HCT116 (cell line): ENCODE measurements at regions of chr16 and their contacts with region 1.

Region 1: GRCh38 chr16:30984669-30985400 is at the start of gene HSD3B7:
- DNase-seq: peak; percentile 58
- ATAC-seq: peak; percentile 91
- H3K4me3 ChIP-seq: peak within 1 kb of the TSS; percentile 35 to 45
- H3K27ac ChIP-seq: peak within 1 kb of the TSS; percentile 49; the same call in 1 of the 2 replicates
- H3K4me1 ChIP-seq: peaks cover 0 to 14% of the 10 kb centered on the region in 2 experiments; a peak in 3 of 4 replicates
- H3K27me3 ChIP-seq: no peaks in the 10 kb centered on the region
- CTCF ChIP-seq: peak; percentile 87 to 98 (median 92)
- POLR2A ChIP-seq: no peak
- RAD21 ChIP-seq: peak; percentile 92
- total RNA-seq, gene HSD3B7: 8.6 TPM

Region 2: GRCh38 chr16:30370444-30371247 is 614.2 kb before region 1 on chr16 and contains the start of gene TBC1D10B:
- CTCF ChIA-PET with region 1: no interaction called
- POLR2A ChIA-PET with region 1: no interaction called
- RAD21 ChIA-PET with region 1: no interaction called
- intact Hi-C with region 1: no loop called
- DNase-seq: peak; percentile 100
- ATAC-seq: peak; percentile 88
- H3K4me3 ChIP-seq: peak within 1 kb of the TSS; percentile 79 to 87
- H3K27ac ChIP-seq: peak within 1 kb of the TSS; percentile 84
- H3K4me1 ChIP-seq: peaks cover 18 to 30% of the 10 kb centered on the region in 2 experiments
- H3K27me3 ChIP-seq: no peaks in the 10 kb centered on the region
- CTCF ChIP-seq: peak in 1 of 3 experiments; percentile 30; a peak in 1 of 6 replicates
- POLR2A ChIP-seq: no peak
- RAD21 ChIP-seq: no peak
- total RNA-seq, gene TBC1D10B: 49.2 TPM

Region 3: DNA sequence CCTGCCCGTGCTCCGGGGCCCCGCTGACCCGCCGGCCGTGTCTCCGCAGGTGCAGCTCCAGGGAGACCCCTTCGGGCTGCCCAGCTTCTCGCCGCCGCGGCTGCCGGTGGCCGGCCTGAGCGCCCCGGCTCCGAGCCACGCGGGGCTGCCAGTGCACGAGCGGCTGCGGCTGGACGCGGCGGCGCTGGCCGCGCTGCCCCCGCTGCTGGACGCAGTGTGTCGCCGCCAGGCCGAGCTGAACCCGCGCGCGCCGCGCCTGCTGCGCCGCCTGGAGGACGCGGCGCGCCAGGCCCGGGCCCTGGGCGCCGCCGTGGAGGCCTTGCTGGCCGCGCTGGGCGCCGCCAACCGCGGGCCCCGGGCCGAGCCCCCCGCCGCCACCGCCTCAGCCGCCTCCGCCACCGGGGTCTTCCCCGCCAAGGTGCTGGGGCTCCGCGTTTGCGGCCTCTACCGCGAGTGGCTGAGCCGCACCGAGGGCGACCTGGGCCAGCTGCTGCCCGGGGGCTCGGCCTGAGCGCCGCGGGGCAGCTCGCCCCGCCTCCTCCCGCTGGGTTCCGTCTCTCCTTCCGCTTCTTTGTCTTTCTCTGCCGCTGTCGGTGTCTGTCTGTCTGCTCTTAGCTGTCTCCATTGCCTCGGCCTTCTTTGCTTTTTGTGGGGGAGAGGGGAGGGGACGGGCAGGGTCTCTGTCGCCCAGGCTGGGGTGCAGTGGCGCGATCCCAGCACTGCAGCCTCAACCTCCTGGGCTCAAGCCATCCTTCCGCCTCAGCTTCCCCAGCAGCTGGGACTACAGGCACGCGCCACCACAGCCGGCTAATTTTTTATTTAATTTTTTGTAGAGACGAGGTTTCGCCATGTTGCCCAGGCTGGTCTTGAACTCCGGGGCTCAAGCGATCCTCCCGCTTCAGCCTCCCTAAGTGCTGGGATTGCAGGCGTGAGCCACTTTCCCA is 82.5 kb before region 1 on chr16:
- CTCF ChIA-PET with region 1: no interaction called
- POLR2A ChIA-PET with region 1: no interaction called
- RAD21 ChIA-PET with region 1: no interaction called
- intact Hi-C with region 1: no loop called
- DNase-seq: no peak
- ATAC-seq: peak; percentile 88
- H3K4me3 ChIP-seq: peak overlapping the region; percentile 37 to 60
- H3K27ac ChIP-seq: peak overlapping the region; percentile 89
- H3K4me1 ChIP-seq: peaks cover 16 to 37% of the 10 kb centered on the region in 2 experiments; a peak in 3 of 4 replicates
- H3K27me3 ChIP-seq: no peaks in the 10 kb centered on the region
- CTCF ChIP-seq: 0 out of 6 replicates have a peak, but pooled peaks of 1 of the 3 experiments have one; percentile 1
- POLR2A ChIP-seq: no peak
- RAD21 ChIP-seq: no peak

Region 4: GRCh38 chr16:31016018-31016417 is 31.2 kb after region 1 on chr16:
- CTCF ChIA-PET with region 1: interaction called, 4 read pairs
- POLR2A ChIA-PET with region 1: no interaction called
- RAD21 ChIA-PET with region 1: no interaction called
- intact Hi-C with region 1: loop called (anchors 2 kb)
- DNase-seq: no peak
- ATAC-seq: peak; percentile 66; the same call in 1 of the 2 replicates
- H3K4me3 ChIP-seq: no peak overlapping the region
- H3K27ac ChIP-seq: no peak overlapping the region
- H3K4me1 ChIP-seq: no peaks in the 10 kb centered on the region
- H3K27me3 ChIP-seq: peaks cover 7% of the 10 kb centered on the region; the same call in 1 of the 2 replicates
- CTCF ChIP-seq: peak in 1 of 3 experiments; percentile 10; a peak in 1 of 6 replicates
- POLR2A ChIP-seq: no peak
- RAD21 ChIP-seq: peak; percentile 39

Region 5: DNA sequence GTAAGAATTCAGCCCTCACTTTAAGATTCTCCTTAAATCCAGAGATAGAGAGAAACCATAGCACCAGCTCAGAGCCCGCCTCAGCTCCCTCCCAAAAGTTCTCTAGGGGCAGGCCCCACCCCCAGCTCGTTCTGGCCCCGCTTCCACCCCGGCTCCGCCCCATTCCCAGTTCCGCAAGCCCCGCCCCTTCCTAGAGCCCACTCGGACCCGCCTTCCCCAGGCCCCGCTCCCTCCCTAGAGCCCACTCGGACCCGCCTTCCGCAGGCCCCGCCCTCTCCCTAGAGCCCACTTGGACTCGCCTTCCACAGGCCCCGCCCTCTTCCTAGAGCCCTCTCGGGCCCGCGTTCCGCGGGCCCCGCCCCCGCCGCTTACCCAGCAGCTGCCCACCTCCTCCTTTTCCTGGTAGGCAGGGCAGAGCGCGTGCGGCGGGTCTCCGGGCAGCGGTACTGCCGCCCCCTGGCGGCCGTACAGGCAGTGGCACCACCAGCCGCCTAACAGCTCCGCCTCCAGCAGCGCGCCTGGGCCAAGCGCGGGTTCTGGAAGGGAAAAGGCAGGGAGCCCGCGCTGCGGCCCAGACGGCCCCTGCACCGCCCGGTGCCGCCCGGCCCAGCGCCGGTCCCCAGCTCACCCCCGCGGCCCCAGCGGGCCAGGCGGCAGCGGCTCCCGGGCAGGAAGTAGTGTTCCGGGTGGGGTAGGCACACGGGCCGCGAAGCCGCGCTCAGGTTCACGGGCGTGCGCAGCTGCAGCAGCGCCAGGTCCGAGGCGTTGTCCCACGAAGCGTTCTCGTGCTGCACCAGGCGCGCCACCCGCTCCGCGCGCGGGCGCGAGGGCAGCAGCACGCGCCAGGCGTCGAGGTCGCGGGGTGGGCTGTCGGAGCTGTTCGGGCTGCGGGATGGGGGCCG is 157.5 kb after region 1 on chr16:
- CTCF ChIA-PET with region 1: interaction called, 29 read pairs
- POLR2A ChIA-PET with region 1: interaction called, 6 read pairs
- RAD21 ChIA-PET with region 1: interaction called, 5 to 7 read pairs
- intact Hi-C with region 1: no loop called
- DNase-seq: peak; percentile 96
- ATAC-seq: peak; percentile 85
- H3K4me3 ChIP-seq: peak overlapping the region; percentile 30 to 48
- H3K27ac ChIP-seq: peak overlapping the region; percentile 72
- H3K4me1 ChIP-seq: peaks cover 36 to 53% of the 10 kb centered on the region in 2 experiments
- H3K27me3 ChIP-seq: no peaks in the 10 kb centered on the region
- CTCF ChIP-seq: peak in 2 of 3 experiments; percentile 84 to 96; a peak in 4 of 6 replicates
- POLR2A ChIP-seq: no peak
- RAD21 ChIP-seq: no peak

Region 6: GRCh38 chr16:31440516-31441184 is 455.8 kb after region 1 on chr16:
- CTCF ChIA-PET with region 1: interaction called, 12 read pairs
- POLR2A ChIA-PET with region 1: no interaction called
- RAD21 ChIA-PET with region 1: no interaction called
- intact Hi-C with region 1: loop called (anchors 1 kb)
- DNase-seq: no peak
- ATAC-seq: no peak
- H3K4me3 ChIP-seq: no peak overlapping the region
- H3K27ac ChIP-seq: no peak overlapping the region
- H3K4me1 ChIP-seq: peaks cover 5 to 18% of the 10 kb centered on the region in 2 experiments; a peak in 3 of 4 replicates
- H3K27me3 ChIP-seq: no peaks in the 10 kb centered on the region
- CTCF ChIP-seq: no peak
- POLR2A ChIP-seq: no peak
- RAD21 ChIP-seq: no peak

Region 7: DNA sequence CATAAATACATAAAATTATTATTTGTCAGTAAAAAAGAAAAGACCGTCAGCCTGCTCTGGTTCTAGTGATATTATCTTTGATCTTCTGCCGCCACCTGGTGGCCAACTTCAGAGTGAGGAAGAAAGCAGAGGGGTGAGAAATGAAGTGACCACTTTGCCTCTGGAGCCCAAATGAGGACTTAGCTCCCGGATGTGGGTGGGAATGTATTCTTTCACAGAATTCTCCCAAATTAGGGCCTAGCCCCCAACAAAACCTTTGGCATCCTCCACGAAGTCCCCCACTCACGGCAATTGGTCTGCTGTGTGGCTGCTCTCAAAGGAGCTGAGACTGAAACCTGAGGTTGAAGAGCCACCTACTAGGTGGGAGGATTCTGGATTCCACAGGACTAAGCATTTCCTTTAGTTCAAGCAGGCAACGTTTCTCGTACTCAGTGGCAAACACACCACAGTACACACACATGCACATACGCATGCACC is 883.9 kb after region 1 on chr16:
- CTCF ChIA-PET with region 1: interaction called, 17 read pairs
- POLR2A ChIA-PET with region 1: no interaction called
- RAD21 ChIA-PET with region 1: no interaction called
- intact Hi-C with region 1: loop called (anchors 1 kb)
- DNase-seq: peak; percentile 73
- ATAC-seq: peak; percentile 84
- H3K4me3 ChIP-seq: no peak overlapping the region
- H3K27ac ChIP-seq: no peak overlapping the region
- H3K4me1 ChIP-seq: peaks cover 3 to 14% of the 10 kb centered on the region in 2 experiments; a peak in 2 of 4 replicates
- H3K27me3 ChIP-seq: no peaks in the 10 kb centered on the region
- CTCF ChIP-seq: peak; percentile 64 to 74 (median 73)
- POLR2A ChIP-seq: no peak
- RAD21 ChIP-seq: peak; percentile 83